ENCODE measurements at regions of chr11 and their contacts with region 1.

Region 1: GRCh38 chr11:47407746-47408590 is at the start of gene SLC39A13:
- DNase-seq: peak; percentile 95
- ATAC-seq: peak; percentile 85
- H3K4me3 ChIP-seq: peak within 1 kb of the TSS; percentile 82
- H3K27ac ChIP-seq: peak within 1 kb of the TSS; percentile 98
- H3K4me1 ChIP-seq: peaks cover 22% of the 10 kb centered on the region
- H3K27me3 ChIP-seq: no peaks in the 10 kb centered on the region
- CTCF ChIP-seq: peak; percentile 97
- POLR2A ChIP-seq: peak; percentile 76
- RAD21 ChIP-seq: peak; percentile 85
- total RNA-seq, gene SLC39A13: 29.2 and 32.4 TPM in 2 replicates

Region 2: GRCh38 chr11:47259178-47259977 is 148.6 kb before region 1 on chr11:
- CTCF ChIA-PET with region 1: no interaction called
- POLR2A ChIA-PET with region 1: no interaction called
- dilution Hi-C with region 1: no loop called
- in situ Hi-C with region 1: no loop called
- intact Hi-C with region 1: loop called (anchors 5 kb)
- DNase-seq: peak; percentile 30
- ATAC-seq: peak; percentile 55
- H3K4me3 ChIP-seq: no peak overlapping the region
- H3K27ac ChIP-seq: 0 out of 2 replicates have a peak overlapping the region, but pooled peaks have one; percentile 10
- H3K4me1 ChIP-seq: peaks cover 21% of the 10 kb centered on the region
- H3K27me3 ChIP-seq: no peaks in the 10 kb centered on the region
- CTCF ChIP-seq: peak; percentile 60
- POLR2A ChIP-seq: no peak
- RAD21 ChIP-seq: peak; percentile 68

Region 3: GRCh38 chr11:47373876-47374720 is 33.9 kb before region 1 on chr11:
- CTCF ChIA-PET with region 1: interaction called, 4 read pairs
- POLR2A ChIA-PET with region 1: no interaction called
- dilution Hi-C with region 1: no loop called
- in situ Hi-C with region 1: no loop called
- intact Hi-C with region 1: loop called (anchors 1 kb)
- DNase-seq: peak; percentile 62
- ATAC-seq: peak; percentile 98
- H3K4me3 ChIP-seq: no peak overlapping the region
- H3K27ac ChIP-seq: no peak overlapping the region
- H3K4me1 ChIP-seq: peaks cover 5% of the 10 kb centered on the region
- H3K27me3 ChIP-seq: peaks cover 4% of the 10 kb centered on the region
- CTCF ChIP-seq: peak; percentile 88
- POLR2A ChIP-seq: no peak
- RAD21 ChIP-seq: peak; percentile 76

Region 4: DNA sequence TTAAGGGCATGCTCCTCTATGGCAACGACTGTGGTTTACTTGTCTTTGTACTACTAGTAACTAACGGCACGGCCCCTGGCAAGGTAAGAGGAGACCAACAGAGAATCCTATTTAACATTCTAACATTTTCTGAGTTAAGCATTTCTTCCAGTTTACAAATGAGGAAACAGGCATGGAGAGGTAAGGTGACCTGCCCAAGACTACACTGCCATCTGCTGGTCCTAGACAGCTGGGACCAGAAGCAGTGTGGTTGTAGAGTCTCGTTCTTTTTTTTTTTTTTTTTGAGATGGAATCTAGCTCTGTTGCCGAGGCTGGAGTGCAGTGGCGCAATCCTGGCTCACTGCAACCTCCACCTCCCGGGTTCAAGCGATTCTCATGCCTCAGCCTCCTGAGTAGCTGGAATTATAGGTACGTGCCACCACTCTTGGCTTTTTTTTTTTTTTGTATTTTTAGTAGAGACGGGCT is 46.2 kb after region 1 on chr11:
- CTCF ChIA-PET with region 1: no interaction called
- POLR2A ChIA-PET with region 1: no interaction called
- dilution Hi-C with region 1: no loop called
- in situ Hi-C with region 1: no loop called
- intact Hi-C with region 1: loop called (anchors 1 kb)
- DNase-seq: peak; percentile 85
- ATAC-seq: peak; percentile 93
- H3K4me3 ChIP-seq: no peak overlapping the region
- H3K27ac ChIP-seq: no peak overlapping the region
- H3K4me1 ChIP-seq: no peaks in the 10 kb centered on the region
- H3K27me3 ChIP-seq: no peaks in the 10 kb centered on the region
- CTCF ChIP-seq: peak; percentile 81
- POLR2A ChIP-seq: no peak
- RAD21 ChIP-seq: peak; percentile 85

Region 5: DNA sequence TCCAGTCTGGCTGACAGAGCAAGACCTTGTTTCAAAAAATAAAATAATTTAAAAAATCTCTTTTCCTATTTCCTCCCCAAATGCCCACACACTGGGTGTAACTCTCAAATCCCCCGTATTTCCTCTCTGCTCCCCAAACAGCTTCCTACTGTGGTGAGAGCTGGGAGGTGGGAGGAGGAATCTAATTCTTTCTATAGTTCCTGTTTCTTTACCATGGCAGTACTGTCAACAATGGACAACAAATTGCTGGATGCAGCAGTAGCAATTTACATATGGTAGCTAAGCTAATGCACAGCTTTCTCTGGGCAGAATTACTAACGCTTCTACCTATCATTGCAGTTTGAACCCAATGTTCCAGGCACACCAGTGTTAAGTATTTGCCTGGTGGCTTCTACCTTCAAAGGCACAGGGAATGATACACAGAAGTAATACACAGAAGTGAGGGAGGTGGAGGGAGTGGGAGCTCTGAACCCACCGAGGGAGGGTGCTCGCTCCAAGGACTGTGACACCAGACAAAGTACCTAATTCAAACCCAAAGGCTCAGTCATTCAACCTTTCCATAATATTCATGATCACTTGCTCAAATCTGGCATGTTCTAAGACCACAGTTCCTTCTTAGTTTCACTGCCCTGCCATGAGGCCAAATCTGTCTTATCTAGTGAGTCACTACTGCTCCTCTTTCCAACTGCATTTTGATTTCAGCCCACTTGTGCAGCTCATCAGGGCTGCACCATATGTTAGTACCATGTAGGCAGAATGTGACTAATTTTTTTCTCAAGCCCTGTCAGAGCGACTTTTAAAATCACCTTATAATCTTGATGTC is 107.1 kb after region 1 on chr11:
- CTCF ChIA-PET with region 1: no interaction called
- POLR2A ChIA-PET with region 1: no interaction called
- dilution Hi-C with region 1: no loop called
- in situ Hi-C with region 1: no loop called
- intact Hi-C with region 1: no loop called
- DNase-seq: peak; percentile 95
- ATAC-seq: peak; percentile 90
- H3K4me3 ChIP-seq: no peak overlapping the region
- H3K27ac ChIP-seq: no peak overlapping the region
- H3K4me1 ChIP-seq: peaks cover 21% of the 10 kb centered on the region
- H3K27me3 ChIP-seq: no peaks in the 10 kb centered on the region
- CTCF ChIP-seq: no peak
- POLR2A ChIP-seq: no peak
- RAD21 ChIP-seq: peak; percentile 18; the same call in 1 of the 2 replicates

Region 6: DNA sequence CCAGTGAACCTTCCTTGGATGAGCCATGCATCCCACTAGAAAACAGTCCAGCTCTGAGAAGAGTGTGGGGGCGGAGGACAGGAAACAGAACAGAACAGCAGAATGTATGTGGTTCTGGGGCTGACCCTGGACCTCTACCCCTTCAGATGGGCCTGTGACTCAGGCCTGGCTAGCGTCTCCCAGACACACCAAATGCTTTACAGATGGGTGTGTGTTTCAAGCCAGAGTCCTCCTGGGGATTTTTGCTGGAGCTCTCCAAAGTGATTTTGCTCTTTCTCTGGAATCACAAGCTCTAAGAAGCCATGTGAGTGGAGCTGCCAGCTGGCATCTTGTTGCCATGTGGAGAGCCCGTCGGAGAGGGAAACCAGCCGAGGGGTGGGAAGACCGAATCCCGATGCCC is 199.4 kb after region 1 on chr11:
- CTCF ChIA-PET with region 1: no interaction called
- POLR2A ChIA-PET with region 1: no interaction called
- dilution Hi-C with region 1: no loop called
- in situ Hi-C with region 1: no loop called
- intact Hi-C with region 1: no loop called
- DNase-seq: peak; percentile 96
- ATAC-seq: peak; percentile 97
- H3K4me3 ChIP-seq: no peak overlapping the region
- H3K27ac ChIP-seq: no peak overlapping the region
- H3K4me1 ChIP-seq: peaks cover 8% of the 10 kb centered on the region
- H3K27me3 ChIP-seq: no peaks in the 10 kb centered on the region
- CTCF ChIP-seq: no peak
- POLR2A ChIP-seq: no peak
- RAD21 ChIP-seq: peak; percentile 24; the same call in 1 of the 2 replicates